ENCODE measurements at regions of chr2 and their contacts with region 1.

Region 1: DNA sequence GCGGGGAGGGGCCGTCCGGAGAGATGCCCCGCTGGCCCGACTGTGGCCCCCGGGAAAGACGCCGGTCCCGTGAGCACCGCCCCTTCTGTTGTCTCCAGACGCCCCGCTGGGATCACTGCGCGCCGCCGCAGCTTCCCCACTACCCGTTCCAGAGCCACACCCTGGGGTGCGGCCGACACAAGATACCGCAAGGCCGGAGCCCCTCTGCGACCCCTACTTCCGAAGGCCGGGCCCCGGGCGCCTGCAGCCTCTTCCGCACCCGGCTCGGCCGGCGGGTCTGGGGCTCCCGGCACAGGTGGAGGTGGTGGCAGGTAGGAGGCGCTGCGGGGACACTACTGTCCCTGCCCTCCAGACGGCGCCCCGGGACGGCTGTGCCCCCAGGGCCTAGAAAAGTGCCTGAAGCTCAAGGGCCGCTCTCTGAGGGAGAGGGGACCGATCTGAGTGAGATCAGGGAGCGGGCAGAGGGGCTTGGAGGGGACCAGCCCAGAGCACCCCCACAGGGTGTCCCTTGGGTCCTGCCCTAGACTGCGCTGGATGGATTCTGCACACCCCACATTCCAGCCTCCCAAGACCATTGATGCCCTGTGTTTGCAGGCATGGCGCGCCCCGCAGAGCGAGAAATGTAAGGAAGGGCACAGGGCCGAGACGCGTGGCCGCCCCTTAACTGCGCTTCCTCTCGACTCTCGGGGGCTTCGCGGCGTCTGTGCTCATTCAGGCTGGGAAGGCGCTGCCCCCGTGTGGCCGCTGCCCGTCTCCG is 80.0 kb downstream of the GFPT1 start:
- DNase-seq: peak; percentile 93
- H3K4me3 ChIP-seq: peak overlapping the region; percentile 72
- H3K27ac ChIP-seq: peak overlapping the region; percentile 53
- H3K4me1 ChIP-seq: peaks cover 9% of the 10 kb centered on the region
- H3K27me3 ChIP-seq: no peaks in the 10 kb centered on the region
- CTCF ChIP-seq: peak; percentile 81

Region 2: GRCh38 chr2:68943581-68944568 is 363.1 kb before region 1 on chr2:
- CTCF ChIA-PET with region 1: interaction called, 25 read pairs
- POLR2A ChIA-PET with region 1: no interaction called
- intact Hi-C with region 1: loop called (anchors 1 kb)
- DNase-seq: peak; percentile 83
- H3K4me3 ChIP-seq: no peak overlapping the region
- H3K27ac ChIP-seq: no peak overlapping the region
- H3K4me1 ChIP-seq: peaks cover 5% of the 10 kb centered on the region
- H3K27me3 ChIP-seq: no peaks in the 10 kb centered on the region
- CTCF ChIP-seq: peak; percentile 81

Region 3: GRCh38 chr2:69012310-69013141 is 294.5 kb before region 1 on chr2:
- CTCF ChIA-PET with region 1: interaction called, 6 read pairs
- POLR2A ChIA-PET with region 1: no interaction called
- intact Hi-C with region 1: loop called (anchors 1 kb)
- DNase-seq: peak; percentile 88
- H3K4me3 ChIP-seq: peak overlapping the region; percentile 95
- H3K27ac ChIP-seq: peak overlapping the region; percentile 86
- H3K4me1 ChIP-seq: peaks cover 41% of the 10 kb centered on the region
- H3K27me3 ChIP-seq: no peaks in the 10 kb centered on the region
- CTCF ChIP-seq: peak; percentile 89